Motor neuron (in vitro differentiated cells): ENCODE measurements at regions of chr6 and their contacts with region 1.

Region 1: DNA sequence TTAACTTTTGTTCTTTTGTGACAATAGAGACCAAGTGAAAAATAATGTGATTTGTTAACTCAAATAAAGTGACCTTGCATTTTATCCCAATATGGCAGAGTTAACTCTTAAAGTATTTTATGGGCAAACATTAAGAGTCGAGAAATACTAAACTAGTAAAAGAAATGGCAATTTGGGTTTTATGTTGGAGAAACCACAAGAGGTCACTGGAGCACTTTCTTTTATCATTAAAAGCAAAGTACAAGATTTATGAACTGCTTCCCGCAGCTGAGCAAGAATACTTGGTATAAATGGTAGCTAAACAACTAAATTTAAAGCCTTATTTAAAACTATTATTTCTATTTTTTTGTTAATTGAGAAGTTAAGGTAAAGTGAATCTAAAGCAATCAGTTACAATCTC is 33.5 kb upstream of the MCM9 start:
- ATAC-seq: peak in 3 of 8 experiments; percentile 46 to 48 (median 47)
- H3K4me3 ChIP-seq: no peak overlapping the region
- H3K27ac ChIP-seq: no peak overlapping the region
- H3K4me1 ChIP-seq: no peaks in the 10 kb centered on the region

Region 2: GRCh38 chr6:119110601-119111548 is 142.5 kb after region 1 on chr6:
- in situ Hi-C with region 1: loop called in 4 of 9 experiments (anchors 10 to 25 kb)
- ATAC-seq: peak in 7 of 8 experiments; percentile 59 to 91 (median 84)
- H3K4me3 ChIP-seq: no peak overlapping the region
- H3K27ac ChIP-seq: no peak overlapping the region
- H3K4me1 ChIP-seq: peaks cover 0 to 2% of the 10 kb centered on the region in 2 donors